ENCODE measurements at regions of chr17 and their contacts with region 1.

Region 1: DNA sequence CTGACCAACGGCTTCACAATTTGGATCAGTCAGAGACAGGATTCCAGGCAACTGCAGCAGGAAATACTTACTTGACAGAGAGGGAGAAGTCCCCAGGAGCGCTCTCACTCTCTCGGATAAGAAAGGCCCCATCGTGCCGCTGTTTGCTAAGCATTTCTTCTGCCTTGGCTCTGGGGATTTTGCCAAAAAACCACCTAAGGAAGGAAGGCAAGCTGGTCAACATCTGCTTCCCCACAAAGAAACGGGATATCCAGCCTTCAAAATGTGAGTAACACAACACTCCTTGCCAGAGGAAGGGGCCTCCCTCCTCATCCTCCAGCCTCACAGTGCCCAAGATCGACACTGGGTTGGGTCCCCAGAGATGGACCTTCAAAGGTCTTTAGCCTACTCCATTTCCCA is 36.6 kb upstream of the SLC25A19 start:
- DNase-seq: no peak
- H3K4me3 Mint-ChIP-seq: no peak overlapping the region
- H3K27ac Mint-ChIP-seq: peak overlapping the region; percentile 81
- H3K4me1 Mint-ChIP-seq: peaks cover 23% of the 10 kb centered on the region
- H3K27me3 Mint-ChIP-seq: no peaks in the 10 kb centered on the region

Region 2: GRCh38 chr17:75412455-75413317 is 86.9 kb after region 1 on chr17:
- CTCF ChIA-PET with region 1: interaction called, 24 read pairs
- POLR2A ChIA-PET with region 1: no interaction called
- intact Hi-C with region 1: no loop called
- DNase-seq: peak; percentile 86
- H3K4me3 Mint-ChIP-seq: peak overlapping the region; percentile 49
- H3K27ac Mint-ChIP-seq: peak overlapping the region; percentile 19
- H3K4me1 Mint-ChIP-seq: peaks cover 16% of the 10 kb centered on the region
- H3K27me3 Mint-ChIP-seq: peaks cover 1% of the 10 kb centered on the region